Right cardiac atrium (tissue), 5 donors: ENCODE measurements at regions of chr14 and their contacts with region 1.

Region 1: DNA sequence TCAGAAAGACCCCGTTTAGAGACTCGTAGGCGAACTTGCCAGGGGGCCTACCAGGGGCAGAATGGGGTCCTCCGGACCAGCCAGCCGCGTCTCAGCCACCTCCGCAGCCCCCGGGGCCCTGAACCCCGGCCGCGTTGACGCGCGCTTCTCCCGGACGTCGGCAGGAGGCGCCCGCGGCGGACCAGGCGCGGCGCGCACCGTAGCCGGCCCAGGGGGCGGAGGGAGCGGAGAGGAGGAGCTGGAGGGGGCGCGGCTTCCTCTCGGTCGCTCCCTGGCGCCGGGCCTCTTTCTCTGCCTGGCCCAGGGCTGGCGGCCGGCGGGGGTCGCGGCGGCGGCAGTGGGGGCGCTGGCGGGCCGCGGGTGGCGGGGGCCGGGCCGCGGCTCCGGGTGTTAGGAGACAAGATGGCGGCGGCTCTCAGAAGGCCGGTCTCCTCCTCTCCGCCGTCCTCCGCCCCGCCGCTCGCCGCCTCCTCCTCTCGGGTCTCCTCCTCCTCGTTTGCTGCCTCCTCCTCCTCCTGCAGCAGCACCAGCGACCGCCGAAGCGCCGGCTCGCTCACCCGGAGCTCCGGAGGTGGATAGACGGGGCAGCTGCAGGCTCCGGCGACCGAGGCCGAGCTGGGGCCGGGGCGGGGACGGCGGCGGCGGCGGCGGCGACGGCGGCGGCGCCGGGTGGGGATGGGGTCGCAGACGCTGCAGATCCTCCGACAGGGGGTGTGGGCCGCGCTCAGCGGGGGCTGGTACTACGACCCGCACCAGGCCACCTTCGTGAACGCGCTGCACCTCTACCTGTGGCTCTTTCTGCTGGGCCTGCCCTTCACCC is at the start of gene PCNX1:
- DNase-seq: peak; percentile 91 to 96 (median 96)
- ATAC-seq: peak; percentile 87 to 92
- H3K4me3 ChIP-seq: peak within 1 kb of the TSS; percentile 84
- H3K27ac ChIP-seq: peak within 1 kb of the TSS; percentile 70
- H3K4me1 ChIP-seq: peaks cover 5% of the 10 kb centered on the region
- H3K27me3 ChIP-seq: no peaks in the 10 kb centered on the region
- total RNA-seq, gene PCNX1: 29.5 to 48.0 (median 36.6) TPM

Region 2: GRCh38 chr14:70821584-70822529 is 85.5 kb before region 1 on chr14:
- intact Hi-C with region 1: loop called in 1 of 4 experiments (anchors 5 kb)
- DNase-seq: peak; percentile 63 to 85 (median 83)
- ATAC-seq: peak; percentile 69 to 76
- H3K4me3 ChIP-seq: peak overlapping the region; percentile 58
- H3K27ac ChIP-seq: no peak overlapping the region
- H3K4me1 ChIP-seq: no peaks in the 10 kb centered on the region
- H3K27me3 ChIP-seq: no peaks in the 10 kb centered on the region

Region 3: DNA sequence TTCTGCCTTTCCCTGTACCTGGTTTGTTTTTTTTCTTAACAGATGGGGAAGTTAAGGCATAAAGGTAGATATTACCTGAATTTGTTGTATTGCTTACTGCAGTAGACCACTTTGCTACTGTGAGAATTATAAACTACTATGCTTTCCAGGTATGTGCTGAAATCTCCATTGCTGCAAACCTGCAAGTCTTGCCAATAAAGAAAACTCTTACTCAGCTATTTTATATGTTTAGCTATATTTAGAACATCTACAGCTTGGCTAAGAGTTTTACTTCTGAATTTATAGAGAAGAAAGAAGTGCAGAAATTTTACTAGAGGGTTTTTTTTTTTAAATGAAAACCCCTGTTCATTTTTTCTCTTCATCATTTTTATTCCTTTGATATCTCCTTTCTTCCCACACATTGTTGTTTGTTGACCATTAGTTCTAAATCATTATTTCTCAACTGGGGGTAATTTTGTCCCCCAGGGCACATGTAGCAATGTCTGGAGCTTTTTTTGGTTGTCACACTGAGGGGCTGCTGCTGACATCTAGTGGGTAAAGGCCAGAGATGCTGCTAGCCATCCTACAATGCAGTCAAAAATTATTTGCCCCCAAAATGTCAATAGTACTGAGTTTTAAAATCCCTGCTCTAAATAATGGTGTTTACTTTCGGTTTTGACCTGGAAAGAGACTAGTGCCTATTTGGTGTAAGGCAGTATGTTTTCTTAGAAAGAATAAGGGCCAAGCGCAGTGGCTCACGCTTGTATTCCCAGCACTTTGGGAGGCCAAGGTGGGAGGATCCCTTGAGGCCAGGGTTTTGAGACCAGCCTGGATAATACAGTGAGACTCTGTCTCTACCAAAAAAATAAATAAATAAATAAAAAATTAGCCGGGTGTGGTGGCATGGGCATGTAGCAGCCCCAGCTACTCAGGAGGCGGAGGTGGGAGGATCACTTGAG is 48.4 kb after region 1 on chr14:
- intact Hi-C with region 1: loop called in 2 of 4 experiments (anchors 5 to 10 kb)
- DNase-seq: no peak
- ATAC-seq: peak; percentile 43 to 55
- H3K4me3 ChIP-seq: no peak overlapping the region
- H3K27ac ChIP-seq: no peak overlapping the region
- H3K4me1 ChIP-seq: peaks cover 2% of the 10 kb centered on the region
- H3K27me3 ChIP-seq: no peaks in the 10 kb centered on the region

Region 4: GRCh38 chr14:70972107-70972976 is 65.0 kb after region 1 on chr14:
- intact Hi-C with region 1: loop called in 2 of 4 experiments (anchors 5 kb)
- DNase-seq: peak; percentile 72 to 89 (median 75)
- ATAC-seq: peak; percentile 79 to 88
- H3K4me3 ChIP-seq: no peak overlapping the region
- H3K27ac ChIP-seq: no peak overlapping the region
- H3K4me1 ChIP-seq: no peaks in the 10 kb centered on the region
- H3K27me3 ChIP-seq: no peaks in the 10 kb centered on the region